Panc1 (cell line): ENCODE measurements at regions of chr3 and their contacts with region 1.

Region 1: DNA sequence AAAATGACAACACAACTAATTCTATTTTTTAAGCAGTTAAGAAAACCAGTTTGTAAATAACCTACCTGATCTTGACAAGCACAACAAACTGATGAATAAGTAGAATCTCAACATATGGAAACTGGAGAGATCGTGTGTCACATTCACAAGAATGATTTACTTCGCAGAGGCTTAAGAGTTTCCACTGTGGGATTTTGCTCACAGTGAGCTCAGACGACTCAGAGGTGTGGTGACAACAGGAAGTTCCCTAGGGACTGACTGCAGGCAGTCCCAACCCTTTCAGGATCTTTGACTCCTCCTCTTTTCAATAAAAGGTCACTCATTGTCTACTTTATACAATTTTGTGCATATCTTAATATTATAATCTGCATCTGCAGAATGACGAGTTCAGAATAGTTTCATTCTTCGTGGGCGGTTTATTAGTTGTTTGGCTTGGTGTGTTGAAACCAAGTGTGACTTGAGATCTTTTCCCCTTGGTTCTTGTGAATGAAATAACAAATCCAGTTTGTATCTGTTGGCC is at the start of gene LIPH:
- DNase-seq: peak; percentile 89
- ATAC-seq: peak; percentile 84
- H3K4me3 ChIP-seq: peak within 1 kb of the TSS; percentile 46 to 71
- H3K27ac ChIP-seq: peak within 1 kb of the TSS; percentile 88
- H3K4me1 ChIP-seq: peaks cover 46% of the 10 kb centered on the region
- H3K27me3 ChIP-seq: no peaks in the 10 kb centered on the region
- CTCF ChIP-seq: no peak
- total RNA-seq, gene LIPH: 19.9 TPM

Region 2: DNA sequence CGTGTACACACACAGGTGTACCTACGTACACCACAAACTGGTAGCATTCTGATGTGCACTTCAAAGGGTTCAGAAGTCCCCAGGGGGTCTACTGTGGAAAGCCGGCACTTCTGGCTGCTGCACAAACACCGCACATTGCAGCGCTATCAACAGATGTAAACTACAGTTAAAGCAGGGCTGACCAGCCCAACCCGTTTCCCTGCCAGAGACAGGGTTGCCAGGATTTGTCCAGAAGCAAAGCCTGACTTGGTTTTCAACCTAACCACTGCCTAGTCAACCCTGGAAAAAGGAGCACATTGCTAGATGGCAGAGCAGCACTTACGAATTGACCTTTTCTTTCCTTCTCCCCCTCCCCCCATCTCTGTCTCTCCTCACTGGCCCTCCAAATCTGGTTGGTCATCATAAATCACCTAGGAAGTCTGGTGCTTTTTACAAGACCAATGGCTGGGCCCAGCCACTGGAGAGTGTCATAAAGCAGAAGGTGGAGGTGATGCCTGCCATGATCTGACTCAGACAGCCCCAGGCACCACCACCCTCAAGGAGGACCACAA is 1586.1 kb before region 1 on chr3:
- CTCF ChIA-PET with region 1: no interaction called
- POLR2A ChIA-PET with region 1: interaction called, 10 read pairs
- in situ Hi-C with region 1: no loop called
- intact Hi-C with region 1: no loop called
- DNase-seq: no peak
- ATAC-seq: no peak
- H3K4me3 ChIP-seq: no peak overlapping the region
- H3K27ac ChIP-seq: no peak overlapping the region
- H3K4me1 ChIP-seq: no peaks in the 10 kb centered on the region
- H3K27me3 ChIP-seq: no peaks in the 10 kb centered on the region
- CTCF ChIP-seq: no peak

Region 3: DNA sequence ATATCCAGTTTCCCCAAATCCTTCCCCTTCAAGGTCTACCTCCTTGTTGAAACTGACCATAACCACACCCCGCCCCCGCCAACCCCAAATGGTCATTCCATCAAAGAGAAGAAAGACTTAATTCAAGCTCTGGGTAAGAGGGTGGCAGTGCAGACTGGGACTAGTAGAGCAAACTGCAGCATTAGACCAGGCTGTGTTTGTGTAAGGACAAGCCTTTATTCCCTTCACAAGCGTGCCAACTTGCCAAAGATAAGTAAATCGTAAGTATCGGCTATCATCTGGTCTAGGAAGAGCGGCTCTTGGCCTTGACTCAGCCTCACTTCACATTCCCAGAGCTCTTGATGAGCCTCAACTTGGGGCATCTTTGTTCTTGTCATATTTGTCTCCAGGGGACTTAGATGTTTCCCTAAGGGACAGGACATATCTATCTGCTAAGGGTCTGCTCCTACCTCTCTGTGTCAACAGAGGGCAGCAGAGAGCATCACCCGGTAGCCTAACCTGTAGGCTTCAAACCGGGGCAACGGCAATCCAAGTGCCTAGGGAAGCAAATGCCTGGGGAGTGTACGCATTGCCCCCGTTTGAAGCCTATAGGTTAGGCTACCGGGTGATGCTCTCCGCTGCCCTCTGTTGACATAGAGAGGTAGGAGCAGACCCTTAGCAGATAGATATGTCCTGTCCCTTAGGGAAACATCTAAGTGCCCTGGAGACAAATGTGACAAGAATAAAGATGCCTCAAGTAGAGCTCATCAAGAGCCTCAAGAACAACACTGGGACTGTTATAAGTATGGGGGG is 198.4 kb before region 1 on chr3:
- CTCF ChIA-PET with region 1: no interaction called
- POLR2A ChIA-PET with region 1: no interaction called
- in situ Hi-C with region 1: no loop called
- intact Hi-C with region 1: loop called (anchors 10 kb)
- DNase-seq: no peak
- ATAC-seq: peak; percentile 97
- H3K4me3 ChIP-seq: no peak overlapping the region
- H3K27ac ChIP-seq: no peak overlapping the region
- H3K4me1 ChIP-seq: no peaks in the 10 kb centered on the region
- H3K27me3 ChIP-seq: no peaks in the 10 kb centered on the region
- CTCF ChIP-seq: peak; percentile 89

Region 4: GRCh38 chr3:185460719-185461350 is 91.6 kb before region 1 on chr3:
- CTCF ChIA-PET with region 1: interaction called, 4 read pairs
- POLR2A ChIA-PET with region 1: no interaction called
- in situ Hi-C with region 1: no loop called
- intact Hi-C with region 1: loop called (anchors 10 kb)
- DNase-seq: peak; percentile 32
- ATAC-seq: peak; percentile 74
- H3K4me3 ChIP-seq: no peak overlapping the region
- H3K27ac ChIP-seq: no peak overlapping the region
- H3K4me1 ChIP-seq: no peaks in the 10 kb centered on the region
- H3K27me3 ChIP-seq: no peaks in the 10 kb centered on the region
- CTCF ChIP-seq: peak; percentile 75

Region 5: DNA sequence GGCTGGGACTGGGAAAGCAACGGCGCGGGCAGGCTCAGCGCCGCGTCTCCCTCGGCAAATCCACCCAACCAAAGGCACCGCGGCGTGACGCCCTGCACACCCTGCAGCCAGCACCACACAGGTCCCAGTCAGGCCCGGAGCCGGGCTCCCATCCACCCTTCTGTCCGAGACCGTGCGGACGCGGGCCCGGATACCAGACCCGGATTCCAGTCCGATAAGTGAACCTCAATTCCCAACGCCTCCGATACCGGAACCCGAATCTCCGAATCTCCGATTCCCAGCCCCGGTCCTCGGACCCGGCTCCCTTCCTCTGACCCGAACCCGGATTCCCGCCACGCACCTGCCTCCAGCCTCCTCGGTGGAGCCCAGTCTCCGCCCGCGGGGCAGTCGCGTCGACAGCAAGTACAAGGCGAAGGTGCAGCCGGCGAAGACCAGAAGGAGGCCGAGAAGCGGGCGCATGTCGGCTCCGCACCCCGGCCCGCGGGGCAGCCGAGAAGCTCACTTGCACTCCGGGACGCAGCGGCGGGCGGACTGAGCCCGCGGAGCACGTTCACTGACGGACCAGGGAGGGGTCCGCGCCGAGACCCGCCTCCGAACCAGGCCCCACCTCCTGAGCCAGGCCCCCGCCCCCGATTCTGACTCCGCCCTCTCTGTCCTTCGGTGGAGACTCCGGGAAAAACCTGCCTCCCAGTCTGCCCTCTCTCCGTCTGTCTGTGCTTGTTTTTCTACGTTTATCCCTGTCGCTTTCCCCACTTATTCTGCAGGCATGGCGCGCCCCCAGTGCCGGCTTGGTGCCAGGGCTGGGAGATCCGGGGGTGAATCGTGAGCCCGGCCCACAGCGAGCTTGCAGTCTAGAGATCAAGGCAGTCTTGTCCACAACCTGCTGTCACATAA is 53.7 kb before region 1 on chr3 and contains the start of gene TMEM41A:
- CTCF ChIA-PET with region 1: no interaction called
- POLR2A ChIA-PET with region 1: no interaction called
- in situ Hi-C with region 1: no loop called
- intact Hi-C with region 1: loop called (anchors 5 kb)
- DNase-seq: no peak
- ATAC-seq: peak; percentile 98
- H3K4me3 ChIP-seq: peak within 1 kb of the TSS; percentile 91 to 96
- H3K27ac ChIP-seq: peak within 1 kb of the TSS; percentile 86
- H3K4me1 ChIP-seq: peaks cover 11% of the 10 kb centered on the region
- H3K27me3 ChIP-seq: no peaks in the 10 kb centered on the region
- CTCF ChIP-seq: no peak; the same call in 1 of the 2 replicates
- total RNA-seq, gene TMEM41A: 30.2 TPM

Region 6: GRCh38 chr3:185605566-185605965 is 53.1 kb after region 1 on chr3:
- CTCF ChIA-PET with region 1: interaction called, 16 read pairs
- POLR2A ChIA-PET with region 1: no interaction called
- in situ Hi-C with region 1: no loop called
- intact Hi-C with region 1: no loop called
- DNase-seq: no peak
- ATAC-seq: no peak
- H3K4me3 ChIP-seq: no peak overlapping the region
- H3K27ac ChIP-seq: no peak overlapping the region
- H3K4me1 ChIP-seq: no peaks in the 10 kb centered on the region
- H3K27me3 ChIP-seq: no peaks in the 10 kb centered on the region
- CTCF ChIP-seq: no peak